AG04450 (cell line): ENCODE measurements at regions of chr11 and their contacts with region 1.

Region 1: DNA sequence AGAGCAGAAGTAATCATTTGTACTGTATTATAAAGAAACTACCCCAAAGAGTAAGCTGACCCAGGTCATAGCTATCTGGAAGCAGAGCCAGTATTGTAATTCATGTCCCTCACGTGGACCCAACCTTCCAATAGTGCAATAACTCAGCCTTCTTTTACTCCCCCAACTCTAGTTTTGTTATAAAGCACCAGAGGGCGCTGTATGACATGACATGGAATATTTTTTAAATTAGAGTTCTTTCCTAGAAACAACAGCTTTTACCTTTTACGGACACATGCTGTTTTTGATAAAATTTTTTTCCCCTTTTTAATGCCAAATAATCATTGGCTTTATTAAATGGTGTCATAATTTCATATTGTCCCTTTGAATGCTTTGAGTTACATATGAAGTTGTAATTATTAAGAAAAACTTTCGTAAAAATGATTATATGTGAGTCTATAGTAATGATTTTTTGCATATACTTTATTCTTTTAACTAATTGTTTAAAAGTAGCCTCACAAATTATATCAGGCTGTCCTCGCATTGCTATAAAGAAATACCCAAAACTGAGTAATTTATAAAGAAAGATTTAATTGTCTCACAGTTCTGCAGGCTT is 76.9 kb downstream of the DKK3 start:
- DNase-seq: peak; percentile 18
- H3K4me3 ChIP-seq: no peak overlapping the region
- H3K27ac ChIP-seq: no peak overlapping the region
- H3K27me3 ChIP-seq: no peaks in the 10 kb centered on the region
- CTCF ChIP-seq: peak; percentile 72

Region 2: GRCh38 chr11:11252403-11252802 is 679.2 kb before region 1 on chr11:
- CTCF ChIA-PET with region 1: no interaction called
- POLR2A ChIA-PET with region 1: no interaction called
- DNase-seq: no peak
- H3K4me3 ChIP-seq: no peak overlapping the region
- H3K27ac ChIP-seq: no peak overlapping the region
- H3K27me3 ChIP-seq: peaks cover 34% of the 10 kb centered on the region
- CTCF ChIP-seq: no peak

Region 3: GRCh38 chr11:11946180-11946579 is 14.6 kb after region 1 on chr11:
- CTCF ChIA-PET with region 1: interaction called, 15 read pairs
- POLR2A ChIA-PET with region 1: no interaction called
- DNase-seq: no peak
- H3K4me3 ChIP-seq: no peak overlapping the region
- H3K27ac ChIP-seq: no peak overlapping the region
- H3K27me3 ChIP-seq: no peaks in the 10 kb centered on the region
- CTCF ChIP-seq: no peak

Region 4: DNA sequence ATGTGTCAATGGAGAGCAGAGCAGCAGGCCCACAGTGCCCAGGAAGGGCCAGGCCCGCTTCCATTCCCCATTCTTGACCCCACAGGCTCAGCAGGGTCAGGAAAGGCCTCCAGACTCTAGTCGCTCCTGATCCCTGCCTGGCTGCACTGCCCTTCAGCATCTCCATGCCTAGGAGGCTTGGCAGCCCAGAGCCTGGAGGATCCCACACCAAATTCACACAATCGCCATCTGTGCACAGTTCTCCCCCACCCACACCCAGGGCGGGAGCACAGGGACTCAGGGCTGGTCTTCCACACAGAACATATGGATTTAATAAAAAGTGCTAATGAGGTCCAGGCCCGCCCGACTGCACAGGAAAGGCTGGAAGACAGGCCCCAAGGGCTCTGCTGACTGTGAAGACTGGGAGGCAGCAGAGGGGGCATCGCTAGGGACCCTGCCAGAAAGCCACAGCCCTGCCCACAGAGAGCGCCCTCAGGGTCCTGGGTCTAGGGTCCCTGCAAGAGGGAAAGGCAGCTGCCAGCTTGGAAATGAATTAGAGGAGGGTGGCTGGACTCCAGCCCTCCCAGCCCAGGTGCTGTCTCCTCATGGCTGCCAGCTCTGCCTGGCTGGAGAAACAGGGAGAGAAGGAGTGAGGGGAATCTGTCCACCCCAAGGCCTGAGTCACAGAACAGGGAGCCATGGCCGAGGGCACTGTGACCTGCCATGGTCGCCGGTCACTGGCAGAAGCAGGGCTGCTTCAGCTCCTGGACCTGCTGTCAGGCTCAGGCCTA is 37.1 kb after region 1 on chr11:
- CTCF ChIA-PET with region 1: no interaction called
- POLR2A ChIA-PET with region 1: no interaction called
- DNase-seq: no peak
- H3K4me3 ChIP-seq: no peak overlapping the region
- H3K27ac ChIP-seq: no peak overlapping the region
- H3K27me3 ChIP-seq: no peaks in the 10 kb centered on the region
- CTCF ChIP-seq: no peak

Region 5: DNA sequence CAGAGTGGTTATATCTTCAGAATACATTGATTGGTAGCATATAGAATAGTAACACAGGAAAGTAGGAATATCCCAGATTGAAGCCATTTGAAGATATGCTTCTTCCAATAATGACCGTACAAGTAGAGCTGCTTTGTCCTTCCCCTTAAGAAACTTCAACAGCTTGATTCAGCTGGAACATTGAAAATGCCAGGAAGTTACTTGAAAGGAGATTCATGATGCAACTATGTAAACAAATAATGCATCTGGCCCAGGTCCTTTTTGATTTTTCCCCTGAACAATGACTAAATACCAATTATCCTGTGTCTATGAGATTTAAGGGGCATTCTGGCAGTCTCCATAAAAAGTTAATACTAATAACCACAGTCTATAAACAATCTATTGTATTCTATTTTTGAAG is 73.9 kb after region 1 on chr11:
- CTCF ChIA-PET with region 1: interaction called, 10 read pairs
- POLR2A ChIA-PET with region 1: no interaction called
- DNase-seq: peak; percentile 62
- H3K4me3 ChIP-seq: peak overlapping the region; percentile 32
- H3K27ac ChIP-seq: peak overlapping the region; percentile 25
- H3K27me3 ChIP-seq: no peaks in the 10 kb centered on the region
- CTCF ChIP-seq: no peak